ENCODE measurements at regions of chr5 and their contacts with region 1.

Region 1: GRCh38 chr5:69042915-69043658 is 50.7 kb upstream of the SLC30A5 start:
- DNase-seq: peak; percentile 93
- ATAC-seq: peak; percentile 96
- H3K4me3 ChIP-seq: peak overlapping the region; percentile 53
- H3K27ac ChIP-seq: peak overlapping the region; percentile 28; the same call in 1 of the 2 replicates
- H3K4me1 ChIP-seq: no peaks in the 10 kb centered on the region
- H3K27me3 ChIP-seq: no peaks in the 10 kb centered on the region; the same call in 1 of the 2 replicates
- CTCF ChIP-seq: peak; percentile 90
- POLR2A ChIP-seq: no peak
- RAD21 ChIP-seq: peak; percentile 88

Region 2: DNA sequence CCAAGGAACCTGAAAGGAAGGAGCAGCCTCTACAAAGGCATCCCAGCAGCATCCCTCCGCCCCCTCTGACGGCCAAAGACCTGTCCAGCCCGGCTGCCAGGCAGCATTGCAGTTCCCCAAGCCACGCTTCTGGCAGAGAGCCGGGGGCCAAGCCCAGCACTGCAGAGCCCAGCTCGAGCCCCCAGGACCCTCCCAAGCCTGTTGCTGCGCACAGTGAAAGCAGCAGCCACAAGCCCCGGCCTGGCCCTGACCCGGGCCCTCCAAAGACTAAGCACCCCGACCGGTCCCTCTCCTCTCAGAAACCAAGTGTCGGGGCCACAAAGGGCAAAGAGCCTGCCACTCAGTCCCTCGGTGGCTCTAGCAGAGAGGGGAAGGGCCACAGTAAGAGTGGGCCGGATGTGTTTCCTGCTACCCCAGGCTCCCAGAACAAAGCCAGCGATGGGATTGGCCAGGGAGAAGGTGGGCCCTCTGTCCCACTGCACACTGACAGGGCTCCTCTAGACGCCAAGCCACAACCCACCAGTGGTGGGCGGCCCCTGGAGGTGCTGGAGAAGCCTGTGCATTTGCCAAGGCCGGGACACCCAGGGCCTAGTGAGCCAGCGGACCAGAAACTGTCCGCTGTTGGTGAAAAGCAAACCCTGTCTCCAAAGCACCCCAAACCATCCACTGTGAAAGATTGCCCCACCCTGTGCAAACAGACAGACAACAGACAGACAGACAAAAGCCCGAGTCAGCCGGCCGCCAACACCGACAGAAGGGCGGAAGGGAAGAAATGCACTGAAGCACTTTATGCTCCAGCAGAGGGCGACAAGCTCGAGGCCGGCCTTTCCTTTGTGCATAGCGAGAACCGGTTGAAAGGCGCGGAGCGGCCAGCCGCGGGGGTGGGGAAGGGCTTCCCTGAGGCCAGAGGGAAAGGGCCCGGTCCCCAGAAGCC is 1877.3 kb before region 1 on chr5:
- CTCF ChIA-PET with region 1: no interaction called
- POLR2A ChIA-PET with region 1: no interaction called
- dilution Hi-C with region 1: no loop called
- in situ Hi-C with region 1: no loop called
- intact Hi-C with region 1: loop called (anchors 10 kb)
- DNase-seq: peak; percentile 61
- ATAC-seq: peak; percentile 91
- H3K4me3 ChIP-seq: no peak overlapping the region
- H3K27ac ChIP-seq: peak overlapping the region; percentile 23; the same call in 1 of the 2 replicates
- H3K4me1 ChIP-seq: peaks cover 2% of the 10 kb centered on the region; the same call in 1 of the 2 replicates
- H3K27me3 ChIP-seq: no peaks in the 10 kb centered on the region
- CTCF ChIP-seq: peak; percentile 65
- POLR2A ChIP-seq: no peak
- RAD21 ChIP-seq: peak; percentile 60

Region 3: DNA sequence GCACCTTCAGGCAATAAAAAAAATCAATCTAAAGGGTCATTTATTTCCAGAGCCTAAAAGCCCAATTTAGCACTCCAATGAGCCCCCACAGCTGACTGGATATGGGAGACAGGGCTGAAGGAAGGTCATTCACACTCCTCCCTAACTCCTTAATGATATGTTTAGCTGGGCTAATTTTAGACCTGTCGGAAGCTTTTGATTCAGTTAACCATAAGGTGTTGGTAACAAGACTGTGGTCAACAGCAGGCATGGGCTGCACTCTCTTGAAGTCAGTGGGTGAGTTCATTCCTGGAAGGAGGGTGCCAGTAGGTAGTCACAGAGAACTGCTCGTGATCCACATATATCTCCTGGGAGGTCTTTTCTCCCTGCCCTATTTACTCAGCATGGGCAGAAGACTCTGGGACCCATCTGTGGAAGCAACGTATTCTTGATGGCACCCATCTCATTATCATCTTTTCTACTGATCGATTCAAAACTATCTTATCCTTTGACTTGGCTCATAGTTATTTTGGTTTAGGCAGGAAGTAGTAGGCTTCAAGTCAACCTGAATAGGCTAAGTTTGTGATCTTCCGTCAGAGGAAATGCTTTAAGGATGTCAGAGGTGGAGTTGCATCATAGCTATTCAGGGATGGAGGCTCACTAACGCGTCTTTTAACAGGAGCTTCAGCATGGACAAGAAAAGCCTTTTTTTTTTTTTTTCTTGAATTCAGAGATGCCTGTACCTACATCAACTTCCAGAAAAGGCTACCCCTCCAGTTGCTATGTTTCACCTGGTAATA is 317.0 kb before region 1 on chr5:
- CTCF ChIA-PET with region 1: no interaction called
- POLR2A ChIA-PET with region 1: no interaction called
- dilution Hi-C with region 1: no loop called
- in situ Hi-C with region 1: no loop called
- intact Hi-C with region 1: no loop called
- DNase-seq: no peak
- ATAC-seq: no peak
- H3K4me3 ChIP-seq: no peak overlapping the region
- H3K27ac ChIP-seq: no peak overlapping the region
- H3K4me1 ChIP-seq: no peaks in the 10 kb centered on the region
- H3K27me3 ChIP-seq: no peaks in the 10 kb centered on the region; the same call in 1 of the 2 replicates
- CTCF ChIP-seq: no peak
- POLR2A ChIP-seq: no peak
- RAD21 ChIP-seq: no peak

Region 4: DNA sequence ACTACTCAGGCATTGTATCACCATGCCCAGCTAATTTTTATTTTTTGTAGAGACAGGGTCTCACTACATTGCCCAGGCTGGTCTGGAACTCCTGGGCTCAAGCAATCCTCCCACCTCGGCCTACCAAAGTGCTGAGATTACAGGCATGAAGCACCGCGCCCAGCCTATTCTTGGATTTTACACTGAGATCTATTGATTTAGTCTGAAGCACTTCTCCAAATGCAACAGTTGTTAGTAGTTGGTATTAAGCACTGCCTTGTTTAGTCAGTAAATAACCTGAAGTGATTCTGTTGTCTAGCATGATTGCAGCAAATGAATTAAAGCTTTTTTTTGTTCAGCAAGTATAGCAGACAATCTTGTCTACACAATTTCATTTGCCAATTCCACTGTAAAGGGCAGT is 115.0 kb after region 1 on chr5:
- CTCF ChIA-PET with region 1: no interaction called
- POLR2A ChIA-PET with region 1: no interaction called
- dilution Hi-C with region 1: no loop called
- in situ Hi-C with region 1: no loop called
- intact Hi-C with region 1: no loop called
- DNase-seq: no peak
- ATAC-seq: no peak
- H3K4me3 ChIP-seq: no peak overlapping the region
- H3K27ac ChIP-seq: no peak overlapping the region
- H3K4me1 ChIP-seq: no peaks in the 10 kb centered on the region
- H3K27me3 ChIP-seq: no peaks in the 10 kb centered on the region
- CTCF ChIP-seq: no peak
- POLR2A ChIP-seq: no peak
- RAD21 ChIP-seq: no peak

Region 5: DNA sequence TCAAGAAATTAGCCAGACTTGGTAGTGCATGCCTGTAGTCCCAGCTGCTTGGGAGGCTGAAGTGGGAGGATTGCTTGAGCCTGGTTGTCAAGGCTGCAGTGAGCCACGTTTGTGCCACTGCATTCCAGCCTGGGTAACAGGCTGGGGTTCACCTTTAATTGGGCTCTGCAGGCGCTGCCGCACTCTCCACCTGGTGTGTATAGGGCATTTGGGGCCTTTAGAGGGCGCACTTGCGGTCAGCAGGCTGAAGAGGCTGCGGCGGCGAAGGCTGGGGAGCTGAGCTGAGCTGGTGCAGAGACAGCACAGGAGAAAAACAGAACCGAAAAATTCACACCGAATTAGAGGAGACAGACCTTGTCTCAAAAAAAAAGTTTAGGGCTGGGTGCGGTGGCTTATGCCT is 222.8 kb after region 1 on chr5:
- CTCF ChIA-PET with region 1: interaction called, 11 read pairs
- POLR2A ChIA-PET with region 1: no interaction called
- dilution Hi-C with region 1: no loop called
- in situ Hi-C with region 1: no loop called
- intact Hi-C with region 1: no loop called
- DNase-seq: no peak
- ATAC-seq: no peak
- H3K4me3 ChIP-seq: no peak overlapping the region
- H3K27ac ChIP-seq: no peak overlapping the region
- H3K4me1 ChIP-seq: peaks cover 3% of the 10 kb centered on the region; the same call in 1 of the 2 replicates
- H3K27me3 ChIP-seq: no peaks in the 10 kb centered on the region
- CTCF ChIP-seq: peak; percentile 12; the same call in 1 of the 2 replicates
- POLR2A ChIP-seq: no peak
- RAD21 ChIP-seq: no peak